GM12878 (cell line): ENCODE measurements at regions of chr3 and their contacts with region 1.

Region 1: DNA sequence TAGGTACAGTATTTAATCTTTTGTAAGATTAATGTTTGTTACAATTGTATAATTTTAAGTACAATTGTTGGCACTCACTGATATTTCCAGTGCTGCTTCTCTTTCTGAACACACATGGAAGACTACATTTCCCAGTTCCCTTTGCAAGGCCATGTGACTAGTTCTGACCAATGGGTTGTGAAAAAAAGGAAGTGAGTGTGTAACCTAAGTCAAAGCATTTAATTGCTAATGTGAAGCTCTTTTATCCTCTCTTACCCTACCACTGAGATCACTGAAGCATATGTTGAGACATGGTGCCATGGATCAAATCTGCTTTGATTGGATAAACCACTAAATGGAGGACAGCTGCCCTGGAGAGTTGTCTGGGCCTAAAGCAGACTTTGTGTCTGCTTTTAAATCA is 83.9 kb upstream of the PLXND1 start:
- DNase-seq: peak; percentile 48
- ATAC-seq: peak; percentile 99
- H3K4me3 ChIP-seq: no peak overlapping the region
- H3K27ac ChIP-seq: no peak overlapping the region
- H3K4me1 ChIP-seq: no peaks in the 10 kb centered on the region
- H3K27me3 ChIP-seq: no peaks in the 10 kb centered on the region
- CTCF ChIP-seq: no peak
- EP300 ChIP-seq: no peak
- POLR2A ChIP-seq: no peak
- RAD21 ChIP-seq: no peak

Region 2: GRCh38 chr3:129663026-129663446 is 27.4 kb before region 1 on chr3:
- CTCF ChIA-PET with region 1: interaction called, 13 read pairs
- POLR2A ChIA-PET with region 1: no interaction called
- RAD21 ChIA-PET with region 1: no interaction called
- SMC1A ChIA-PET with region 1: interaction called, 4 read pairs
- in situ Hi-C with region 1: no loop called
- intact Hi-C with region 1: no loop called
- DNase-seq: no peak
- ATAC-seq: no peak
- H3K4me3 ChIP-seq: no peak overlapping the region
- H3K27ac ChIP-seq: no peak overlapping the region
- H3K4me1 ChIP-seq: peaks cover 3% of the 10 kb centered on the region; the same call in 1 of the 2 replicates
- H3K27me3 ChIP-seq: no peaks in the 10 kb centered on the region
- CTCF ChIP-seq: no peak
- EP300 ChIP-seq: no peak
- POLR2A ChIP-seq: no peak
- RAD21 ChIP-seq: no peak